K562 (cell line): ENCODE measurements at regions of chr20 and their contacts with region 1.

Region 1: GRCh38 chr20:43840382-43841070 is 74.1 kb upstream of the TOX2 start:
- DNase-seq: peak in 3 of 4 experiments; percentile 20 to 71 (median 59)
- ATAC-seq: peak; percentile 96
- H3K4me3 ChIP-seq: no peak overlapping the region
- H3K27ac ChIP-seq: no peak overlapping the region
- H3K4me1 ChIP-seq: no peaks in the 10 kb centered on the region
- H3K27me3 ChIP-seq: peaks cover 0 to 12% of the 10 kb centered on the region in 2 experiments; a peak in 3 of 5 replicates
- CTCF ChIP-seq: peak; percentile 53 to 66 (median 64)
- EP300 ChIP-seq: no peak
- POLR2A ChIP-seq: no peak
- RAD21 ChIP-seq: peak in 1 of 2 experiments; percentile 38; a peak in 2 of 4 replicates

Region 2: GRCh38 chr20:43710370-43711044 is 130.0 kb before region 1 on chr20:
- CTCF ChIA-PET with region 1: no interaction called
- POLR2A ChIA-PET with region 1: no interaction called
- in situ Hi-C with region 1: no loop called
- intact Hi-C with region 1: no loop called
- DNase-seq: no peak
- ATAC-seq: no peak
- H3K4me3 ChIP-seq: no peak overlapping the region
- H3K27ac ChIP-seq: no peak overlapping the region
- H3K4me1 ChIP-seq: no peaks in the 10 kb centered on the region
- H3K27me3 ChIP-seq: no peaks in the 10 kb centered on the region
- CTCF ChIP-seq: no peak
- EP300 ChIP-seq: no peak
- POLR2A ChIP-seq: no peak
- RAD21 ChIP-seq: no peak

Region 3: GRCh38 chr20:43749734-43750294 is 90.7 kb before region 1 on chr20:
- CTCF ChIA-PET with region 1: no interaction called
- POLR2A ChIA-PET with region 1: no interaction called
- in situ Hi-C with region 1: no loop called
- intact Hi-C with region 1: loop called (anchors 10 kb)
- DNase-seq: peak; percentile 75 to 86 (median 85)
- ATAC-seq: peak; percentile 95
- H3K4me3 ChIP-seq: no peak overlapping the region
- H3K27ac ChIP-seq: no peak overlapping the region
- H3K4me1 ChIP-seq: peaks cover 5 to 6% of the 10 kb centered on the region in 2 experiments; a peak in 3 of 5 replicates
- H3K27me3 ChIP-seq: peaks cover 9 to 37% of the 10 kb centered on the region in 2 experiments
- CTCF ChIP-seq: peak; percentile 92 to 96 (median 93)
- EP300 ChIP-seq: no peak
- POLR2A ChIP-seq: no peak
- RAD21 ChIP-seq: peak; percentile 92 to 95

Region 4: DNA sequence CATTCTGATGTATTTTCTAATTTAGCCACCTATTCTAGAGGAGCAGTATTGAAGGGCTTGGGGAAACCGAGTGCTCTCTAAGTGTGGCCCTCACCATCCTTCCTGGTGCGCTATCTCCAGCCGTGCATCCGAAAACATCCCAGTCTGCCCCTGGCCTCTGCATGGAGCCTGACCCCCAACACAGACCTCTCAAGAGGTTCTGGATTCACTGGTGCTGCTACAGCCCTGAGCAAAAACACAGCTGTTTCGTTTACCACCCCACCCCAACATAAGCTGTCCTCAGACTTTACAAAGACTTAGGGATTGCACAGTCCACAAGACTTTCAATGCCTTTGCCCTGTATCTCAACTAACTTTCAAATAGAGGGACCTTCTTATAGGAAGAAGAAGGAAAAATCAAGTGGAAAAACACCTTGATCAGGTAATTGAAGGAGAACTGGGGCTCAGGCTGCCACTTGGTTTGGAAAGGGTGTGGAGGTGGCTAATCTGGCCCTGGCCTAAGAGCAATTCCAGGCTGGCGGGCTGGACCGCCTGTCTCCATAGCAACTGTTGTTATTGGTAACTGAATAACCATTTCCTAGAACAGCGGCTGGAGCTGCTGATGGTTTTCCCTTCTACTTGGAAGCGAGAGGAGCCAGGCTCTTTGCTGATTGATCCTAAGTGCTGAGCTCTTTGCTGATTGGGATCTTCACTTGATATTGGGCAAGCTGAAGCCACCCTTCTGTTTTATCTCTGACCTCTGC is 16.0 kb before region 1 on chr20:
- CTCF ChIA-PET with region 1: no interaction called
- POLR2A ChIA-PET with region 1: no interaction called
- in situ Hi-C with region 1: no loop called
- intact Hi-C with region 1: no loop called
- DNase-seq: peak in 1 of 4 experiments; percentile 13
- ATAC-seq: no peak
- H3K4me3 ChIP-seq: no peak overlapping the region
- H3K27ac ChIP-seq: no peak overlapping the region
- H3K4me1 ChIP-seq: no peaks in the 10 kb centered on the region
- H3K27me3 ChIP-seq: peaks cover 0 to 10% of the 10 kb centered on the region in 2 experiments; a peak in 1 of 5 replicates
- CTCF ChIP-seq: no peak
- EP300 ChIP-seq: no peak
- POLR2A ChIP-seq: no peak
- RAD21 ChIP-seq: no peak